Naive thymus-derived CD4-positive, alpha-beta T cell (primary cell): ENCODE measurements at regions of chr10 and their contacts with region 1.

Region 1: GRCh38 chr10:119859420-119860258 is 13.0 kb downstream of the MCMBP start:
- DNase-seq: peak in 7 of 9 donors; percentile 21 to 62 (median 40)
- ATAC-seq: peak; percentile 81
- H3K4me3 ChIP-seq: no peak overlapping the region
- H3K4me3 Mint-ChIP-seq: peak overlapping the region in 1 of 10 donors; percentile 18
- H3K27ac ChIP-seq: no peak overlapping the region
- H3K27ac Mint-ChIP-seq: peak overlapping the region in 3 of 9 donors; percentile 13 to 49 (median 17)
- H3K4me1 ChIP-seq: no peaks in the 10 kb centered on the region
- H3K4me1 Mint-ChIP-seq: peaks cover 16 to 47% (median 40%) of the 10 kb centered on the region in 7 donors
- H3K27me3 ChIP-seq: no peaks in the 10 kb centered on the region
- H3K27me3 Mint-ChIP-seq: no peaks in the 10 kb centered on the region

Region 2: DNA sequence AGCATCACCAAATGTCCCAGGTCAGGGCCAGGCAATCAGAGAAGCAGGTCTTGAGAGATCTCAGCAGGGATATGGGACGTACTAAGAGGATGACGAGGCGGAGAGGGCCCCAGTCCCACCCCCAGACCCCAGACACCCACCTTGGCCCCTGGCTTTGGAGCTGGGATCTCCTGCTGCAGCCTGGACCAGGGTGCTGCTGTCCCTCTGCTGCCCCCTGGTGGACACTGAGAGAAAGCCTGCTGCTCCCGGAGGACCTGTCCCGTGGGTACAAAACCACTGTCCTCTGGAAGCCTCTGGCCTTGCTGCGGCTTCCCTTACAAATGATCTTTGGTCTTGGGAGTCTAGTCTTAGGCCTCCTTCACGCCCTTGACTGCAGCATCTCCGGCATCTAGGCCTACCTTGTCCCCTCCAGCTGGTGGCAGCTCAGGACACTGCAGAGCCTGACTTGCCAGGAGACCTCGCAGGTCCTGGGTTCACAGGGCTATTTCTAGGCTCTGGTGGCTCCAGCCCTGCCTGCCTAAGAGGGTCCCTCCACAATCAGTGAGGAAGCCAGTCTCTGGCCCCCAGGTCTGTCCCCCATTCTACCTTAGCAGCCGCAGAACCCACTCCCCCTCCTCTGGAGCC is 414.2 kb before region 1 on chr10:
- CTCF ChIA-PET with region 1: no interaction called
- POLR2A ChIA-PET with region 1: no interaction called
- intact Hi-C with region 1: loop called in 1 of 2 experiments (anchors 1 kb)
- DNase-seq: peak; percentile 64 to 89 (median 76)
- ATAC-seq: peak; percentile 85
- H3K4me3 ChIP-seq: no peak overlapping the region
- H3K4me3 Mint-ChIP-seq: peak overlapping the region in 1 of 10 donors; percentile 60
- H3K27ac ChIP-seq: no peak overlapping the region
- H3K27ac Mint-ChIP-seq: peak overlapping the region in 8 of 9 donors; percentile 6 to 81 (median 52)
- H3K4me1 ChIP-seq: no peaks in the 10 kb centered on the region
- H3K4me1 Mint-ChIP-seq: peaks cover 12 to 23% (median 17%) of the 10 kb centered on the region in 7 donors
- H3K27me3 ChIP-seq: no peaks in the 10 kb centered on the region
- H3K27me3 Mint-ChIP-seq: no peaks in the 10 kb centered on the region

Region 3: GRCh38 chr10:119686439-119687191 is 173.0 kb before region 1 on chr10:
- CTCF ChIA-PET with region 1: interaction called, 22 read pairs
- POLR2A ChIA-PET with region 1: no interaction called
- intact Hi-C with region 1: loop called (anchors 1 kb)
- DNase-seq: peak; percentile 62 to 80 (median 75)
- ATAC-seq: peak; percentile 92
- H3K4me3 ChIP-seq: peak overlapping the region; percentile 58
- H3K4me3 Mint-ChIP-seq: peak overlapping the region; percentile 51 to 86 (median 76)
- H3K27ac ChIP-seq: peak overlapping the region; percentile 40
- H3K27ac Mint-ChIP-seq: peak overlapping the region in 8 of 9 donors; percentile 2 to 87 (median 63)
- H3K4me1 ChIP-seq: peaks cover 0 to 6% of the 10 kb centered on the region in 2 donors
- H3K4me1 Mint-ChIP-seq: peaks cover 12 to 25% (median 21%) of the 10 kb centered on the region in 7 donors
- H3K27me3 ChIP-seq: no peaks in the 10 kb centered on the region
- H3K27me3 Mint-ChIP-seq: peaks cover 0 to 3% (median 0%) of the 10 kb centered on the region in 5 donors

Region 4: DNA sequence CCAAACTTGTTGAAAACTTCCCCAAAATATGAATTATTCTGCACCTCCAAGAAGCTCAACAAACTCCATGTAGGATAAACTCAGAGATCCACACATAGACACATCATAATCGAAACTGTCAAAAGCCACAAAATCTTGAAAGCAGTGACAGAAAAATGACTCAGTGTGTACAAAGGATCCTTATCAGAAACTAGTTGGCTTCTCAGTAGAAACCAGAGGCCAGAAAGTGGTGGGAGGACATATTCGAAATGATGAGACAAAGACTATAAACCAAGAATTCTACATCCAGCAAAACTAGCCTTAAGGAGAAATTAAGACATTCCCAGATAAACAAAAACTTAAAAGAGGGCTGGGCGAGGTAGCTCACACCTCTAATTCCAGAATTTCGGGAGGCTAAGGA is 25.5 kb before region 1 on chr10:
- CTCF ChIA-PET with region 1: no interaction called
- POLR2A ChIA-PET with region 1: no interaction called
- intact Hi-C with region 1: loop called in 1 of 2 experiments (anchors 2 kb)
- DNase-seq: no peak
- ATAC-seq: no peak
- H3K4me3 ChIP-seq: no peak overlapping the region
- H3K4me3 Mint-ChIP-seq: peak overlapping the region in 1 of 10 donors; percentile 47
- H3K27ac ChIP-seq: no peak overlapping the region
- H3K27ac Mint-ChIP-seq: peak overlapping the region; percentile 22 to 85 (median 78)
- H3K4me1 ChIP-seq: no peaks in the 10 kb centered on the region
- H3K4me1 Mint-ChIP-seq: peaks cover 0 to 18% (median 8%) of the 10 kb centered on the region in 7 donors
- H3K27me3 ChIP-seq: no peaks in the 10 kb centered on the region
- H3K27me3 Mint-ChIP-seq: no peaks in the 10 kb centered on the region

Region 5: DNA sequence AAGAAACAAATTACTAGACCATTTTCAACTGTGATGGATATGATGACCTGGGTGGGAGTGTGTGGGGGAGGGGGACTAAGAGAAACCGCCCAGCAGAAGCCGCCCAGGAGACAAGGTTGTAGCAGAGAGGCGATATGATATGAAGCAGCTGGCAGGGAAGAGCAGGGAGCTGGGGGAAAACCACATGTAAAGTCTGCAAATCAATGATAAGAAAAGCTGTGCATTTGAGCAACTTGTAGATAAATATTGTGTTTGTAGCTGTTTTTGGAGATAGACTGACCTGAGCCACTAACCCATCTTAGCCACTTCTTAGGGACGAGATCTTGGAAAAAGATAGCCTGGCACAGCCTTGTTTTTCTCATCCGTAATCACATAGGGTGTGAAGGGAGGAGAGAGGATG is 285.5 kb after region 1 on chr10:
- CTCF ChIA-PET with region 1: no interaction called
- POLR2A ChIA-PET with region 1: no interaction called
- intact Hi-C with region 1: no loop called
- DNase-seq: no peak
- ATAC-seq: no peak
- H3K4me3 ChIP-seq: no peak overlapping the region
- H3K4me3 Mint-ChIP-seq: no peak overlapping the region
- H3K27ac ChIP-seq: no peak overlapping the region
- H3K27ac Mint-ChIP-seq: no peak overlapping the region
- H3K4me1 ChIP-seq: no peaks in the 10 kb centered on the region
- H3K4me1 Mint-ChIP-seq: no peaks in the 10 kb centered on the region
- H3K27me3 ChIP-seq: no peaks in the 10 kb centered on the region
- H3K27me3 Mint-ChIP-seq: peaks cover 0 to 20% (median 10%) of the 10 kb centered on the region in 5 donors

Region 6: DNA sequence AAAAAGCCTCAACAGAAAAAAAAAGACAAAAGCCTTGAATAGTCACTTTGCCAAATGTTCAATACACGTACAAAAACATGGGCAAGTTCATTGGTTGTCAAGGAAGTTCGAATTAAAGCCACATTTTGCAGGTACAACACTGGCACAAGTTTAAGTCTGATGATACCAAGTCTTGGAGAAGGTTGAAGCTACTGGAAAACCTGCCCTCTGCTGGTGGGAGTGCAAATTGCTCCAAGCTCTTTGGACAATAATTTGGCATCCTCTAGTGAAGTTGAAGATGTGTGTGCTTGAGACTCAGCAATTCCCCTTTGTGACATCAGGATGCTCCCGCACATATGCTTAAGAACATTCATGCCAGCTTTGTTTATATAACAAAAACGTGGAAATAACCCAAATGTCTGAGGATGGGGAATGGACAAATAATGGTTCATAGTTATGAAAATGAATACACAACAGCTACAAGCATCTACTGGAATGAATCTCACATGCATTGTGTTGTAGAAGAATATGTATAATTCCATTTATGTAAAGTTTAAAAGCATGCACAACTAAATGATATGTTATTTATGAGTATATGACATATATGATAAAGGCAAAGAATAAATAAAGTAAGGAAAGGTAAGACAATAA is 477.4 kb after region 1 on chr10:
- CTCF ChIA-PET with region 1: no interaction called
- POLR2A ChIA-PET with region 1: no interaction called
- intact Hi-C with region 1: loop called in 1 of 2 experiments (anchors 10 kb)
- DNase-seq: peak in 6 of 9 donors; percentile 24 to 39 (median 28)
- ATAC-seq: peak; percentile 46
- H3K4me3 ChIP-seq: no peak overlapping the region
- H3K4me3 Mint-ChIP-seq: no peak overlapping the region
- H3K27ac ChIP-seq: no peak overlapping the region
- H3K27ac Mint-ChIP-seq: no peak overlapping the region
- H3K4me1 ChIP-seq: no peaks in the 10 kb centered on the region
- H3K4me1 Mint-ChIP-seq: no peaks in the 10 kb centered on the region
- H3K27me3 ChIP-seq: no peaks in the 10 kb centered on the region
- H3K27me3 Mint-ChIP-seq: peaks cover 6 to 25% (median 15%) of the 10 kb centered on the region in 5 donors